ENCODE measurements at regions of chr6 and their contacts with region 1.

Region 1: DNA sequence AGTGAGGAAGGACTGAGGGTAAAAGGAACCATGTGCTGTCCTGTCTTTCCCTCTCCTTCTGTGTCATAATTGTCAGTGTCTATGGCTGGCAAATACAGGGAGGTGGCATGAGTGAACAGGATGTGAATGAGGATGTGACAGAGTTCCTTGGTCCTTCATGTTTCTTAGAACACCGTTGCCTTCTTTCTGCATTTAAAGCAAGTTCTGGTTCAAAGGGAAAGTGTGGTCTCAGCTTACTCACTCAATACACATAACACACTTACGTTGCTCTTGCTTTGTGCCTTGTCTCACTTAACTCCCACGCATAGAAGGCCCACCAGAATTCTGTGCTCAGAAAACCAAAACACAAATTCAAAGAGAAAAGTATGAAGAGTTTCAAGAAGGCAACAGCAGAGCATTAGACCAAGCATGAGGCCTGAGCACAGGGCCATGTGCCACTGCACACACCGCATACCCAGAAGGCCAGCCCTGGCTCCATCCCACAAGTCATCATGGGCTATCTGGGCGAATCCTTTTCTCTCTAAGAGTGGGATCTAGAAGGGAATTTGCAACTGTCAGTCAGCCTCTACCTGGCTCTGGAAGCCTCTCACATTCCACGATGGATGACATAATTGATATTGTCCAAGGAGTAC is 38.9 kb upstream of the SAYSD1 start:
- DNase-seq: no peak
- ATAC-seq: no peak
- H3K4me3 ChIP-seq: no peak overlapping the region
- H3K27ac ChIP-seq: no peak overlapping the region
- H3K4me1 ChIP-seq: no peaks in the 10 kb centered on the region
- H3K27me3 ChIP-seq: peaks cover 36% of the 10 kb centered on the region
- CTCF ChIP-seq: no peak
- POLR2A ChIP-seq: no peak
- RAD21 ChIP-seq: no peak

Region 2: GRCh38 chr6:38882157-38882556 is 271.7 kb before region 1 on chr6:
- CTCF ChIA-PET with region 1: no interaction called
- POLR2A ChIA-PET with region 1: no interaction called
- RAD21 ChIA-PET with region 1: no interaction called
- intact Hi-C with region 1: no loop called
- DNase-seq: no peak
- ATAC-seq: no peak
- H3K4me3 ChIP-seq: no peak overlapping the region
- H3K27ac ChIP-seq: no peak overlapping the region
- H3K4me1 ChIP-seq: no peaks in the 10 kb centered on the region
- H3K27me3 ChIP-seq: peaks cover 43% of the 10 kb centered on the region
- CTCF ChIP-seq: no peak
- POLR2A ChIP-seq: no peak
- RAD21 ChIP-seq: no peak

Region 3: DNA sequence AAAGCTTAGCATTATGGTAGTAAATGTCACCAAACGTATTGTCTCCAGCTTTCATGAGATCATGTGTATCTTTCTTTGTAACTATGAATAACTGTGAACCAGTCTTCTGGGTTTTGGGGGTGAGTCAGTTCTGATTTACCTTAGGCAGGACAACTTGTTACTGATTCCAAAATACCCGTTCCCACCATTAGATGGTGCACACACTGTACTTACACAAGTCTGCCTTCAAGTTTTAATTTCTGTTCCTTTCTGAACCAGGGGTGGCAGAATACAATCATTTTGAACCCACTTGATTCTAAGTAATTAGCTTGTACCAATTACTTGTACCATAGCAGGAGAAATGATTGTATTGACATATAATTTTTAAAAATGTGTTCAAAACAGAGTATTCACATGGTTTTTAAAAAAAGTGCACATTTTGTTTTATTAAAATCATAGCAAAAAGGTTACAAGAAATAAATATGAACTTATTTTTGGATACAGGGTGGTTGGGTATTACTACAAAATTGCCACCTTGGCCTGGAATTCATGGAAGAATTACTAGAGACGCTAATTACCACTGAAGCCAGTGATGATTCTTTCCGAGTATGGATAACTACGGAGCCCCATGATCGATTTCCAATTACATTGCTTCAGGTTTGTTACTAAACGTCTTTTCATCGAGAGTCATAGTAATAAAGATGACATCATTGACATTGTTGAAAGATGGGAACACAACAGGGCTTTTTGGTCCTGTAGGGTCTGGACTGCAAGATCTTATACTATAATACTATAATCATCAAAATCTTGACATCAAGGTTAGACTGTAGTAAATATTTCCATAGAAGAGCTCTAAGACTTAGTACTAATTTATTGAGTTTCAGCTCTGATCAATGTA is 180.5 kb before region 1 on chr6:
- CTCF ChIA-PET with region 1: interaction called, 4 read pairs
- POLR2A ChIA-PET with region 1: no interaction called
- RAD21 ChIA-PET with region 1: no interaction called
- intact Hi-C with region 1: loop called (anchors 5 kb)
- DNase-seq: peak; percentile 72
- ATAC-seq: peak; percentile 96
- H3K4me3 ChIP-seq: no peak overlapping the region
- H3K27ac ChIP-seq: no peak overlapping the region
- H3K4me1 ChIP-seq: no peaks in the 10 kb centered on the region
- H3K27me3 ChIP-seq: peaks cover 70% of the 10 kb centered on the region
- CTCF ChIP-seq: peak; percentile 65 to 83 (median 77)
- POLR2A ChIP-seq: no peak
- RAD21 ChIP-seq: peak; percentile 67

Region 4: GRCh38 chr6:39003072-39003471 is 150.8 kb before region 1 on chr6:
- CTCF ChIA-PET with region 1: no interaction called
- POLR2A ChIA-PET with region 1: no interaction called
- RAD21 ChIA-PET with region 1: no interaction called
- intact Hi-C with region 1: loop called (anchors 10 kb)
- DNase-seq: no peak
- ATAC-seq: peak; percentile 73
- H3K4me3 ChIP-seq: no peak overlapping the region
- H3K27ac ChIP-seq: no peak overlapping the region
- H3K4me1 ChIP-seq: no peaks in the 10 kb centered on the region
- H3K27me3 ChIP-seq: peaks cover 81% of the 10 kb centered on the region
- CTCF ChIP-seq: peak; percentile 33 to 46 (median 45); a peak in 4 of 6 replicates
- POLR2A ChIP-seq: no peak
- RAD21 ChIP-seq: peak; percentile 45

Region 5: GRCh38 chr6:39543095-39543494 is 389.2 kb after region 1 on chr6:
- CTCF ChIA-PET with region 1: no interaction called
- POLR2A ChIA-PET with region 1: no interaction called
- RAD21 ChIA-PET with region 1: no interaction called
- intact Hi-C with region 1: no loop called
- DNase-seq: no peak
- ATAC-seq: no peak
- H3K4me3 ChIP-seq: no peak overlapping the region
- H3K27ac ChIP-seq: no peak overlapping the region
- H3K4me1 ChIP-seq: no peaks in the 10 kb centered on the region
- H3K27me3 ChIP-seq: peaks cover 33% of the 10 kb centered on the region
- CTCF ChIP-seq: no peak
- POLR2A ChIP-seq: no peak
- RAD21 ChIP-seq: no peak